ENCODE measurements at regions of chr5 and their contacts with region 1.

Region 1: DNA sequence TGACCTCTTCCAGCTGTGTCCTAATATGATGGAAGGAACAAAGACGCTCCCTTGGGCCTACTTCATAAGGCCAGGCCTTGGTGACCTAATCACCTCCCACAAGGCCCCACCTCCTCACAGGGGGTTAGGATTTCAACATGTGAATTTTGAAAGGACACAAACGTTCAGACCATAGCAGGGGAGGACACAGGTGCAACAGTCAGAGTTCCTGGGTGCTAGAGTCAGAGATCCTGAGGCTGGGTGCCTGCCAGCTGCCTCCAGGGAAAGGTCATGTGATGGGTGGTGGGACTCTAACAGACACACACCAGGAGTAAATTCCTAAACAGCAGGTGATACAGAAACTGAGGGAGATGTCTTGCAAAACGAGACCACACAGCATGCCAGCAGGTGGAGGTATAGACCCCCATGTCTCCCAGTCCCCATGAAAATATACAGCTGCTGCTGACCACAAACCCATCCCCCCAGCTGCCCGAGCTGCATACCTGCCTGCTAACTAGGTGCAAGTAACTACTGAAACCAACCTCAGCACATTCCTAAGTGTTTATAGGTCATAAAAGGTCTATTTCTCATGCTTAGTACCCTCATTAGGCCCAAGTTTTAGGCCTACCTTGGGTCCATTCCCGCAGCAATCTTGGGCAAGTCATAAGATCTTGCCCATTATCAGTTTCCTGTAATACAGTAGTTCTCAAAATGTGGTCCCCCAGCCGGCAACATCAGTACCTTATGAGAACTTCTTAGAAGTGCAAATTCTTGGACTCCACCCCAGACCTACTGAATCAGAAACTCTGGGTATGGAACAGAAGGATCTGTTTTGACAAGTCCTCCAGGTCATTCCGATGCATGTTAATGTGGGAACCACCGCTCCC is 245.4 kb downstream of the ENC1 start:
- DNase-seq: no peak

Region 2: GRCh38 chr5:74316064-74316679 is 79.0 kb before region 1 on chr5:
- intact Hi-C with region 1: loop called in 1 of 2 experiments (anchors 2 kb)
- DNase-seq: peak; percentile 84

Region 3: GRCh38 chr5:74424162-74424850 is 29.2 kb after region 1 on chr5:
- intact Hi-C with region 1: no loop called
- DNase-seq: no peak

Region 4: DNA sequence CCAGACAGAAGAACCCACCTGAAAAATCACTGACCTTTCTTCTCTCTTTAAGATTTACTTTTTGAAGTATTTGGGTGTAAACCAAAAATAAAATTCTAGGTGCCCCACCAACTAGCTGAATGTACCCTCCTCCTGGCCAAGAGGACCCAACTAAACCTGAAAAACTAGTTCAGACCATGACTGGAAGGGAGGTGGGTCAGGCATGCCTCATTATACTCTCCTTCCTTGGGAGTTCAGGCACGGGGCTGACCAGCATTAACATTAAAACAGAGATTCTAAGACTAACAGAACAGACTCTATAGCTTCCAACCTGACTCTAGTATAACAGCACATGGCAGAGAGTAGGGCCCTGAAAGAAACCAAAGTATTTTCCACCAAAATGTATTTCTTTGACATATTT is 1054.9 kb after region 1 on chr5:
- intact Hi-C with region 1: loop called in 1 of 2 experiments (anchors 5 kb)
- DNase-seq: no peak